GM10248 (cell line): ENCODE measurements at regions of chr1 and their contacts with region 1.

Region 1: GRCh38 chr1:51331206-51332100 is 1.1 kb upstream of the TTC39A start:
- DNase-seq: peak; percentile 71
- CTCF ChIP-seq: no peak

Region 2: GRCh38 chr1:51341876-51342496 is 10.5 kb after region 1 on chr1:
- CTCF ChIA-PET with region 1: interaction called, 20 read pairs
- POLR2A ChIA-PET with region 1: no interaction called
- DNase-seq: peak; percentile 70
- CTCF ChIP-seq: peak; percentile 38